Pancreas (tissue), 10 donors: ENCODE measurements at regions of chr12 and their contacts with region 1.

Region 1: DNA sequence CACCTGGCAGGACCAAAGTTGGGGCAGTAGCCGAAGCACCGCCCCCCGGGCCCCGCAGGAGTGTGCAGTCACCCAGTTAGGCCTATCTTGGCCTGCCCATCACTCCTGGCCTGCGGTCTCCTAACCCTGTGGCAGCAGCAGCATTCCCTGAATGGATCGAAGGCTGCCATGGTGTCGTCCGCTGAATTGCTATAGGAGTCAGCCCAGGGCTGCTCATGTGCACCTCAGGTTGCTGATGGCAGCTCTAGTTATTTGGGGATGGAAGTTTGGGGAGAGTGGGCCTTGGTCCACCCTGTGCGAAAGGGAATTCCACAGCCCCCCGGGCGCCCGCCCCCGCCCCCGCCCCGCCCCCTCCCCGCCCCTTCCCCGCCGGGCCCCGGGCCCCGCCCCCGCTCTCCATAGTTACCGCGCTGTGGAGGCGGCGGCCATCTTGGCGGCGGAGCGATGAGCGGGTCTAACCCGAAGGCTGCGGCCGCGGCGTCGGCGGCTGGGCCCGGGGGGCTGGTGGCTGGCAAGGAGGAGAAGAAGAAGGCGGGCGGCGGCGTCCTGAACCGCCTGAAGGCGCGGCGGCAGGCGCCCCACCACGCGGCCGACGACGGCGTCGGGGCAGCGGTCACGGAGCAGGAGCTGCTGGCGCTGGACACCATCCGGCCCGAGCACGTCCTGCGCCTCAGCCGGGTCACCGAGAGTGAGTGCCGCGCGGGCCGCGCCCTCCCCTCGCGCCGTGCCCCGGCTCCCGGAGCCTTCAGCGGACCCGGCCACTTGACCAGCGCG is at the start of gene UNC119B:
- DNase-seq: peak; percentile 54 to 91 (median 72)
- ATAC-seq: peak; percentile 88 to 93 (median 92)
- H3K4me3 ChIP-seq: peak within 1 kb of the TSS; percentile 85 to 97 (median 96)
- H3K27ac ChIP-seq: peak within 1 kb of the TSS; percentile 42 to 84 (median 72)
- H3K4me1 ChIP-seq: peaks cover 0 to 3% (median 0%) of the 10 kb centered on the region in 3 donors
- H3K27me3 ChIP-seq: no peaks in the 10 kb centered on the region
- CTCF ChIP-seq: no peak
- total RNA-seq, gene UNC119B: 11.8 to 18.9 (median 15.3) TPM

Region 2: DNA sequence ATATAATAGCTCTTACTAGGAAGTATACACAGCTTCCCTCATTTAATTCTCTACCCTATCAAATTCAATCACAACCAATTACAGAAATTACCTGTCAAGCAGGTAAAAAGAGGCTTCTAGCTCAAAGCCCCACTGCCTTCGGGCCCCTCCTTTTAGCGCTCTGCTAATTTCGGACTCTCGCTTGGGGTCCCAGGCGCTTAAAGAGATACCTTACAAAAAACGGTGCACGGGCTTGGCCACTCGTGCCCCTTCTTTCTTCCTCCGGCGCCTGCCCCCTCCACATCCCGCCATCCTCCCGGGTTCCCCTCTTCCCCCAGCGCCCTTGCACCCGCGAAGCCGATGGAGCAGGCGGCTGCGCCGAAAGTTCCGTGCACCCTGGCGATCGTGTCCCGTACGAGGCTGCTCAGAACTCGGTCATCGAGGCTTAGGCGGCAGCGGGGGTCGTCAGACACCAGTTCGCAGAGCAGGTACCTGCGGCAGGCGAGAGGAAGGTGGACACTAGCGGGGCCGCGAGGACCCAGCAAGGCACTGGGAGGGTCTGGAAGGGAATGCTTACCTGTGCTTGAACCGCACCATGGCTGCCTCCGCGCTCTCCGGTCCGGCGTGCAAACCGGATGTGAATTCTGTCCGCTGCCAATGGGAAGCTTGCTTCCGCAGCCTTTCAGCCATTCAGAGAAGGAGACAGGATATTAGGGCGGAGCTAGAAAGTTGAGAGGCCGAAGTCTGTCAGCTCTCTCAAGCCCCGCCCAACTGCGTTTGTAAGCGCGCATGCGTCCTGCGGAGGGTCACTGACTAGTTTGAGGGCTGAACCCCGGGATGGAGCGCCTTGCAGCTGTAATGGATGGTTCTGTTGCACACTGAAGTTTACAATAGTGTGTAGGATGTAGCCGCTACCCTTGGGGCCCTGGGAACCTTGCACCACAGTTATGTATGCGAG is 129.2 kb before region 1 on chr12 and contains the start of gene POP5:
- intact Hi-C with region 1: loop called in 1 of 3 experiments (anchors 5 kb)
- DNase-seq: peak; percentile 94 to 99 (median 97)
- ATAC-seq: peak; percentile 92 to 96 (median 94)
- H3K4me3 ChIP-seq: peak within 1 kb of the TSS; percentile 74 to 86 (median 80)
- H3K27ac ChIP-seq: peak within 1 kb of the TSS in 2 of 4 donors; percentile 44 to 62
- H3K4me1 ChIP-seq: peaks cover 6 to 12% (median 6%) of the 10 kb centered on the region in 3 donors
- H3K27me3 ChIP-seq: no peaks in the 10 kb centered on the region
- CTCF ChIP-seq: no peak
- total RNA-seq, gene POP5: 10.5 to 23.5 (median 14.7) TPM

Region 3: GRCh38 chr12:120640840-120641833 is 69.1 kb before region 1 on chr12:
- intact Hi-C with region 1: loop called in 2 of 3 experiments (anchors 5 to 10 kb)
- DNase-seq: peak; percentile 49 to 91 (median 68)
- ATAC-seq: peak; percentile 91 to 94 (median 93)
- H3K4me3 ChIP-seq: peak overlapping the region; percentile 11 to 55 (median 33)
- H3K27ac ChIP-seq: no peak overlapping the region
- H3K4me1 ChIP-seq: peaks cover 0 to 5% (median 4%) of the 10 kb centered on the region in 3 donors
- H3K27me3 ChIP-seq: peaks cover 0 to 11% (median 0%) of the 10 kb centered on the region in 4 donors
- CTCF ChIP-seq: no peak

Region 4: DNA sequence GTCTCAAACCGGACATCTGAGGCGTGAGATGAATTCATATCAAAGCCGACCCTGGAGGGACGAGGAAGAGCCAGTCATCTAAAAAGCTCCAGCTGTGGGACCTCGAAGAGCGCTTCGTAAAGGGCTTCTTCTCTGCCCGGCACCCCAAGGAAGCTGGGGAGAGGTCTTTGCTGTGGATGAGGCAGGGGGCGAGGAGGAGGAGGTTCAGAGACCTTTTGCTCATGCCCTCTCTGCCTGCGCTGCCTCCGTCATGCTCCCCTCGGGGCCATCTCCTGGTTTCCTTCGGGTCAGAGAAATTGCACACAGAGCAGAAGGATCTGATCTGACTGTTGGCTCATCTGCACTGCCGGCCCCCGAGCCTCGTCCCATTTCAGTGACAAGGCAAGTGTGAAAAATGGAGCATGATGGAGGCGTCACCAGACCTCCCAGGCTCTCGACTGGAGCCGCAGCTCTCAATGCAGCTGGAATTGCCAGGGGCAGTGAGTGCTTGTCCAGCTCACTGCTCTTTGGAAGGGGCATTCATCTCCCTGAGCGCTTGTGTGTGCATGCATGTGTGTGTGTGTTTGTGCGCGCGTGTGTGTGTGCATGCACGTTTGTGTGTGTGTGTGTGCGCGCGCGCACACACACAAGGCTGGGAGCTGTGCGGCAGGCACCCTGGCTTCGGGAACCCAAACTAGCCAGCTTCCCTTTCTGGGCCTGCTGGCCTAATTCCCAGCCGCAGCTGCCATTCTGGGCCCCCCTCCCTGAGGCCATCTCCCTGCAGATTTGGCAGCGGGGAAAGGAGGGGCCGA is 60.6 kb before region 1 on chr12:
- intact Hi-C with region 1: loop called in 2 of 3 experiments (anchors 5 to 10 kb)
- DNase-seq: no peak
- ATAC-seq: no peak
- H3K4me3 ChIP-seq: no peak overlapping the region
- H3K27ac ChIP-seq: no peak overlapping the region
- H3K4me1 ChIP-seq: no peaks in the 10 kb centered on the region
- H3K27me3 ChIP-seq: peaks cover 0 to 2% (median 0%) of the 10 kb centered on the region in 4 donors
- CTCF ChIP-seq: peak in 1 of 4 donors; percentile 22

Region 5: DNA sequence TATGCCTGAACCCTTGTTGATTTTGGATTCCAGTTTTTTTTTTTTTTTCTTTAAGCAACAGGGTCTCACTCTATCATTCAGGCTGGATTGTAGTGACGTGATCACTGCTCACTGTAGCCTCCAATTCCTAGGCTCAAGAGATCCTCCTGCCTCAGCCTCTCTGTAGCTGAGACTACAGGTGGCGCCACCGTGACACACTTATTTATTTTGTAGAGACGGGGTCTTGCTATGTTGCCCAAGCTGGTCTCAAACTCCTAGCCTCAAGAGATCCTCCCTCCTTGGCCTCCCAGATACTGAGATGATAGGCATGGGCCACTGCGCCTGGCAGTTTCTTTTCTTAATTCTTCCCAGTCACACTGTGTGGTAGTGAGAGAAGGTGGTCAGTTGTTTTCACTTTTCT is 40.6 kb after region 1 on chr12:
- intact Hi-C with region 1: no loop called
- DNase-seq: no peak
- ATAC-seq: no peak
- H3K4me3 ChIP-seq: no peak overlapping the region
- H3K27ac ChIP-seq: no peak overlapping the region
- H3K4me1 ChIP-seq: no peaks in the 10 kb centered on the region
- H3K27me3 ChIP-seq: no peaks in the 10 kb centered on the region
- CTCF ChIP-seq: no peak

Region 6: GRCh38 chr12:121314431-121314830 is 604.2 kb after region 1 on chr12:
- intact Hi-C with region 1: no loop called
- DNase-seq: no peak
- ATAC-seq: no peak
- H3K4me3 ChIP-seq: no peak overlapping the region
- H3K27ac ChIP-seq: no peak overlapping the region
- H3K4me1 ChIP-seq: no peaks in the 10 kb centered on the region
- H3K27me3 ChIP-seq: no peaks in the 10 kb centered on the region
- CTCF ChIP-seq: no peak